ENCODE measurements at regions of chr12 and their contacts with region 1.

Region 1: GRCh38 chr12:121536899-121537813 is 43.7 kb downstream of the KDM2B start:
- DNase-seq: peak; percentile 95
- H3K4me3 ChIP-seq: peak overlapping the region; percentile 65 to 90 (median 77)
- H3K27ac ChIP-seq: peak overlapping the region; percentile 85 to 97 (median 92)
- H3K4me1 ChIP-seq: peaks cover 45 to 57% (median 50%) of the 10 kb centered on the region in 4 donors
- H3K27me3 ChIP-seq: no peaks in the 10 kb centered on the region
- CTCF ChIP-seq: no peak
- EP300 ChIP-seq: no peak
- POLR2A ChIP-seq: peak; percentile 24

Region 2: DNA sequence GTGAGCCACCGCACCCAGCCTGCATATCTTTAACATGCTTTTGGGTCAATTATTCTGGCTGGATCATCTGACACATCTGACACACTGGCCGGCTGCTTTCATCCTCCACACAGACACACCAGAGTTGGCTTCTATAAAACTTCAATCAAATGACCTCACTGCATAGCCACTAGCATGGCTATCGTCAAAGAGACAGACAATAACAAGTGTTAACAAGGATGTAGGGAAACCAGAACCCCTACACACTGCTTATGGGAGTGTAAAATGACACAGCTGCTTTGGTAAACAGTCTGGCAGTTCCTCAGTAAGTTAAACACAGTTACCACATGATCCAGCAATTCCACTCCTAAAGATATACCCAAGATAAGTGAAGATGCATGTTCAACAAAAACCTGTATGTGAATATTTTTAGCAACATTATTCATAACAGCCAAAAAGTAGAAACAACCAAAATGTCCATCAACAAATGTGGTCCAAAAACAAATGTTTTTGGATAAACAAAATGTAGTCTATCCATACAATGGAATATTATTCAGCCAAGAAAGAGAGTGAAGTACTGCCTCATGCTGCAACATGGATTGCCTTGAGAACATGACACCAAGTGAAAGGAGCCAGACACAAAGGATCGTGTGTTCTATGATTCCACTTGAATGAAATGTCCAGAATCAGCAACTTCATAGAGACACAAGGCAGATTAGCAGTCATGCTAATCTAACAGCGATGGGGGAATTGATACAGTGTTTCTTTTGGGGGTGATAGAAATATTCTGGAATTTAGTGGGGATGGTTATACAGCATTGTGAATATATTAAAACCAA is 33.5 kb after region 1 on chr12:
- intact Hi-C with region 1: loop called (anchors 5 kb)
- DNase-seq: no peak
- H3K4me3 ChIP-seq: no peak overlapping the region
- H3K27ac ChIP-seq: no peak overlapping the region
- H3K4me1 ChIP-seq: peaks cover 14 to 24% (median 19%) of the 10 kb centered on the region in 4 donors
- H3K27me3 ChIP-seq: no peaks in the 10 kb centered on the region
- CTCF ChIP-seq: no peak
- EP300 ChIP-seq: no peak
- POLR2A ChIP-seq: no peak

Region 3: GRCh38 chr12:121883315-121883660 is 346.1 kb after region 1 on chr12:
- intact Hi-C with region 1: no loop called
- DNase-seq: no peak
- H3K4me3 ChIP-seq: no peak overlapping the region
- H3K27ac ChIP-seq: no peak overlapping the region
- H3K4me1 ChIP-seq: peaks cover 4 to 8% (median 5%) of the 10 kb centered on the region in 4 donors
- H3K27me3 ChIP-seq: peaks cover 0 to 8% (median 0%) of the 10 kb centered on the region in 4 donors
- CTCF ChIP-seq: no peak
- EP300 ChIP-seq: no peak
- POLR2A ChIP-seq: no peak